AG04449 (cell line): ENCODE measurements at regions of chr1 and their contacts with region 1.

Region 1: GRCh38 chr1:202184750-202185460 is 8.7 kb upstream of the LGR6 start:
- DNase-seq: peak; percentile 12
- H3K4me3 ChIP-seq: no peak overlapping the region
- CTCF ChIP-seq: peak; percentile 94

Region 2: GRCh38 chr1:201933840-201934430 is 251.0 kb before region 1 on chr1:
- CTCF ChIA-PET with region 1: no interaction called
- POLR2A ChIA-PET with region 1: no interaction called
- DNase-seq: no peak
- H3K4me3 ChIP-seq: no peak overlapping the region
- CTCF ChIP-seq: no peak

Region 3: GRCh38 chr1:202132031-202132907 is 52.6 kb before region 1 on chr1:
- CTCF ChIA-PET with region 1: no interaction called
- POLR2A ChIA-PET with region 1: no interaction called
- DNase-seq: no peak
- H3K4me3 ChIP-seq: no peak overlapping the region
- CTCF ChIP-seq: no peak

Region 4: DNA sequence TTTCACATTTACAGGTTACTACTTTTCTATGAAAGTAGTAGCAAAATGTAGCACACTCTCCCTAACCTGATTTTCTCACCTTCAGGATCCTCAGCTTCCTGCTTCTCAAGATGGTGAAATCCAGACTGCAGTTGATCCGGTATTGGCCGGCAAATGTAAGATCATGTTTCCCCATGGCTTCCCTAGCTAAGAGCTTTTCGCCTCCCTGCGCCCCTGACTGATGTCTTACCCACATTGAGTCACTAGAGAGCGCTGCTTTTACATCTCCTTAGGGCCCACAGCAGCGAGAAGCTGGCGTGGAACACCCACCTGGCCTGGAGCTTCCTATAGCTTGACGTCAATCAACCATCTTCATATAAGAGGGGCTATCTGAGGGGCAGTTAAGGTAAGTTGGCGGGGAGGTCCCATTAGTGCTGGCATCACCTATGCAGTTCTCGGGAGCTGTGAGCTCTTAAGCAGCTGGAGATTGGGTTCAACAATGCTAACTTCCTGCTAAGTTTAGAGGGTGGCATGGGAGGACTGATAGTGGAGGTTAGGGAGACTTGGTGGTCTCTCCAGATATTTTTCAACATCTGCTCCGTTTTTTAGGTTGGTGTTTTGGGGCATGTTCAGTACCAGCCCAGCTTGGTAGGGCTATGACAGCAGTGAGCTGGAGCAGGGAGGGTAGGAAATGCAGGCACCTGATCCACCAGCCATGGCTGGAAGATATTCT is 30.0 kb before region 1 on chr1:
- CTCF ChIA-PET with region 1: interaction called, 14 read pairs
- POLR2A ChIA-PET with region 1: no interaction called
- DNase-seq: peak; percentile 26
- H3K4me3 ChIP-seq: no peak overlapping the region
- CTCF ChIP-seq: peak; percentile 58

Region 5: GRCh38 chr1:202200112-202200566 is 15.2 kb after region 1 on chr1:
- CTCF ChIA-PET with region 1: interaction called, 50 read pairs
- POLR2A ChIA-PET with region 1: no interaction called
- DNase-seq: no peak
- H3K4me3 ChIP-seq: no peak overlapping the region
- CTCF ChIP-seq: no peak

Region 6: GRCh38 chr1:202304375-202304774 is 119.5 kb after region 1 on chr1:
- CTCF ChIA-PET with region 1: interaction called, 123 read pairs
- POLR2A ChIA-PET with region 1: no interaction called
- DNase-seq: no peak
- H3K4me3 ChIP-seq: no peak overlapping the region
- CTCF ChIP-seq: no peak

Region 7: GRCh38 chr1:202716654-202717053 is 531.7 kb after region 1 on chr1:
- CTCF ChIA-PET with region 1: interaction called, 74 read pairs
- POLR2A ChIA-PET with region 1: interaction called, 3 read pairs
- DNase-seq: no peak
- H3K4me3 ChIP-seq: no peak overlapping the region
- CTCF ChIP-seq: no peak